GM18951 (cell line): ENCODE measurements at regions of chr1 and their contacts with region 1.

Region 1: DNA sequence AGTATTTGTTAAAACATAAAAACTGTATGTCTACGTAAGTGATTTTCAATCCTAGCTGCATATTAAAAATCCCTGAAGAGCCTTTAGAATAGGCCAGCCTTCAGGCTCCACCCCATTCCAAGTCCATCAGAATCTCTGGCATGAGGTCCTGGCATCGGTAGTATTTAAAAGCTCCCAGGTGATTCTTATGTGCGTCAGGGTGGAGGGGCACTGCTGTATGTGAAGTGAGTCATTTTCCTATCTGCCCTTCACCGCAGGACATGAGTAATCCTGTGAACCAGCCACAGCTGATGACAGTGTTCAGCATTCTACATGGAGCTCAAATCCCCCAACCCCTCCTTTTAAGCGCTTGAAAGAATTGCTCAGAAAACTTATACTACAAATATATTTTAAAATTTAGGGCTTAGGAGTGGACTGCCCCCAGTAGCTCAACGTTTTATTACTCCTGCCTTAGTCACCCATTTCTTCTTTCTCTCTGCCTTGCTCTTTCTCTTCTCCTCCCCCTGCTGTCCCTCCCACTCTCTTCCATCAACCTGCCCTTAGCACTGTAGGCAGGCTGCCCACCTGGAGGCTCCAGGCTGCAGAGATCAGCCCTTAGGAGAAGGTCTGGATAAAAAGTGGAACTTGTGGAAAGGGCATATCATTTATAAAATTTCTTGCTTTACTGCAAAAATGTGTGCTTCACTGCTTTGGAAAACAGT is 73.8 kb upstream of the ZNF281 start:
- POLR2A ChIP-seq: no peak

Region 2: GRCh38 chr1:200131616-200132015 is 352.0 kb before region 1 on chr1:
- in situ Hi-C with region 1: loop called (anchors 5 kb)
- POLR2A ChIP-seq: no peak

Region 3: DNA sequence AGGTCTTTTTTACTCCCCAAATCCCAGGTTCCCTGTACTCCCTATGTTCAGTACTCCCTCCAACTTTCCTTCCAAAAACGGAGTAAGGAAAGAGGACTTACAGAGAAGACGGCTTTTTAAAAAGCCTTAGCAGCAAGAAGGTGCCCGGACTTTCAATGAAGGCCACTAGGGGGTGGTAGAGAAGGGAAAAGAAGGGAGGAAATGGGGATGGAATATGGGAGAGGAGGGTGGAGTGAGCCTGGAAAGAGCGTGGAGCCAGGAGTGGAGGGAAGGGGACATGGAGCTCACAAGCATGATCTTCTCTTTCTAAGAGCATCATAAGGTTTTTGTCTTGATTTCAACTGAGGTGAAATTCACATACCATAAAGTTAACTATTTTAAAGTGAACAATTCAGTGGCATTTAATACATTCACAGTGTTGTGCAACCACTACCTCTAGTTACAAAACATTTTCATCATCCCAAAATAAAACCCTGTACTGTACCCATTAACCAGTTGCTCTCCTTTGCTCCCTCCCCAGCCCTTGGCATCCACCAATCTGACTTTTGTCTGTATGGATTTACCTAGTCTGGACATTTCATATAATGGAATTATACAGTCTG is 203.7 kb before region 1 on chr1:
- in situ Hi-C with region 1: loop called (anchors 5 kb)
- POLR2A ChIP-seq: no peak

Region 4: DNA sequence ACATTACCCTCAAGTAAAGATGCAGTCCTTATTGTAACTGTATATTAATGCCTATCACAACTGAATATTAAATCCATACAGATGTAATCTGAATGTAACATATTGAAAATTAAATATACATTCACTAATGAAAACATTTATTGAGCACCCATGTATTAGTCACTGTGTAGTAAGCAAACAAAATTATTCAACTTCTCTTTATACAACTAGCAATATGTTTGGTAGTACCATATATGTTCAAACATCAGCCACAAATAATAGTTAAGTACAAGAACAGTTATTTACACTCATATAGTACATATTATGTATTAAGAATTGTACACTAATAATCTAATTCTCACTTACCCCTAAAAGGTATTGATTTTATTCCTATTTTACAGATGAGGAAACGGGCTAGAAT is 119.0 kb after region 1 on chr1:
- in situ Hi-C with region 1: no loop called
- POLR2A ChIP-seq: no peak

Region 5: GRCh38 chr1:200751717-200752116 is 268.1 kb after region 1 on chr1:
- in situ Hi-C with region 1: no loop called
- POLR2A ChIP-seq: no peak